ENCODE measurements at regions of chr20 and their contacts with region 1.

Region 1: GRCh38 chr20:12984069-12984765 is 24.6 kb upstream of the SPTLC3 start:
- DNase-seq: no peak
- H3K4me3 ChIP-seq: no peak overlapping the region
- H3K27ac ChIP-seq: no peak overlapping the region
- H3K4me1 ChIP-seq: no peaks in the 10 kb centered on the region
- H3K27me3 ChIP-seq: no peaks in the 10 kb centered on the region
- CTCF ChIP-seq: no peak
- EP300 ChIP-seq: no peak
- POLR2A ChIP-seq: no peak

Region 2: GRCh38 chr20:12925214-12925755 is 58.9 kb before region 1 on chr20:
- in situ Hi-C with region 1: loop called in 1 of 4 experiments (anchors 10 kb)
- intact Hi-C with region 1: no loop called
- DNase-seq: peak; percentile 44
- H3K4me3 ChIP-seq: no peak overlapping the region
- H3K27ac ChIP-seq: no peak overlapping the region
- H3K4me1 ChIP-seq: peaks cover 0 to 9% (median 0%) of the 10 kb centered on the region in 4 donors
- H3K27me3 ChIP-seq: no peaks in the 10 kb centered on the region
- CTCF ChIP-seq: peak; percentile 70 to 91 (median 73)
- EP300 ChIP-seq: no peak
- POLR2A ChIP-seq: no peak

Region 3: DNA sequence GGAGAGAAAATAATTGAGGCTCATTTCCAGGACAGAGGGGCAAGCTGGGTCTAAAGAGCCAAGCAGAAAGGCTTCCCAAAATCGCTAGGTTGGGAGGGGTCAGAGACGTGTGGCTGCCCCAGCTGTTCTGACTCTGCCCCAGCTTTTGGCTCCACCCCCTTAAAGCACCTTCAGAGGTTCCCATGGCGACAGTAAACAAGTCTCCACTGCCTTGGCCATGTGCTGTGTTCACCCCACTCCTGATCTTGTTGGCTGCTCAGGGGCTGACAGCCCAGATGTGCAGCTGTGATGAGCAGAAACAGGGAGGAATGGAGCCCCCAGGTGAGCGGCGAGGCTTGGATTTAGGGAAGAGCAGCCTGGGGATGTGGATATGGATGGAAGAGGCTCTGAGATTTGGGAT is 48.2 kb before region 1 on chr20:
- in situ Hi-C with region 1: no loop called
- intact Hi-C with region 1: no loop called
- DNase-seq: no peak
- H3K4me3 ChIP-seq: no peak overlapping the region
- H3K27ac ChIP-seq: no peak overlapping the region
- H3K4me1 ChIP-seq: no peaks in the 10 kb centered on the region
- H3K27me3 ChIP-seq: no peaks in the 10 kb centered on the region
- CTCF ChIP-seq: no peak
- EP300 ChIP-seq: no peak
- POLR2A ChIP-seq: no peak

Region 4: GRCh38 chr20:13099676-13100075 is 115.5 kb after region 1 on chr20:
- in situ Hi-C with region 1: loop called in 3 of 4 experiments (anchors 10 to 25 kb)
- intact Hi-C with region 1: no loop called
- DNase-seq: no peak
- H3K4me3 ChIP-seq: no peak overlapping the region
- H3K27ac ChIP-seq: no peak overlapping the region
- H3K4me1 ChIP-seq: no peaks in the 10 kb centered on the region
- H3K27me3 ChIP-seq: no peaks in the 10 kb centered on the region
- CTCF ChIP-seq: no peak
- EP300 ChIP-seq: no peak
- POLR2A ChIP-seq: no peak

Region 5: DNA sequence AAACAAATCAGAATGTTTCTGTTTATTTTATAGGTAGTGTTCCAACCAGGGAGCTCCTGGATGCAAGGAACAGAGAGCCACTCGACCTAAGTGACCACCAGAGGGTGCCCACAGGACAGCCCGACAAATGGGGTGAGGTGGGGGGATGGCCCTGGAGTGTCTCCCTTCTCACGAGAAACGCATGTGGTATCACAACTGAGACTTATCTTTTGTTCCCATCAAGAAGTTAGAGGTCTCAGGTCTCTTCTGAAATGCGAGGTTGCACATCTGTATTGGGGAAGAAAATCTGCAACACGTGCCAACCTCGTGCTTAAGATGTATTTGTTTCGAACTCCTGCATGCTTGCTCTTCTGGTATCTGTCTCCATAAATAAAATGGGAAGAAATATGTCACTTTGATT is 340.8 kb after region 1 on chr20:
- in situ Hi-C with region 1: no loop called
- intact Hi-C with region 1: no loop called
- DNase-seq: no peak
- H3K4me3 ChIP-seq: no peak overlapping the region
- H3K27ac ChIP-seq: no peak overlapping the region
- H3K4me1 ChIP-seq: no peaks in the 10 kb centered on the region
- H3K27me3 ChIP-seq: no peaks in the 10 kb centered on the region
- CTCF ChIP-seq: peak; percentile 14 to 37 (median 37)
- EP300 ChIP-seq: no peak
- POLR2A ChIP-seq: no peak